ENCODE measurements at regions of chr11 and their contacts with region 1.

Region 1: DNA sequence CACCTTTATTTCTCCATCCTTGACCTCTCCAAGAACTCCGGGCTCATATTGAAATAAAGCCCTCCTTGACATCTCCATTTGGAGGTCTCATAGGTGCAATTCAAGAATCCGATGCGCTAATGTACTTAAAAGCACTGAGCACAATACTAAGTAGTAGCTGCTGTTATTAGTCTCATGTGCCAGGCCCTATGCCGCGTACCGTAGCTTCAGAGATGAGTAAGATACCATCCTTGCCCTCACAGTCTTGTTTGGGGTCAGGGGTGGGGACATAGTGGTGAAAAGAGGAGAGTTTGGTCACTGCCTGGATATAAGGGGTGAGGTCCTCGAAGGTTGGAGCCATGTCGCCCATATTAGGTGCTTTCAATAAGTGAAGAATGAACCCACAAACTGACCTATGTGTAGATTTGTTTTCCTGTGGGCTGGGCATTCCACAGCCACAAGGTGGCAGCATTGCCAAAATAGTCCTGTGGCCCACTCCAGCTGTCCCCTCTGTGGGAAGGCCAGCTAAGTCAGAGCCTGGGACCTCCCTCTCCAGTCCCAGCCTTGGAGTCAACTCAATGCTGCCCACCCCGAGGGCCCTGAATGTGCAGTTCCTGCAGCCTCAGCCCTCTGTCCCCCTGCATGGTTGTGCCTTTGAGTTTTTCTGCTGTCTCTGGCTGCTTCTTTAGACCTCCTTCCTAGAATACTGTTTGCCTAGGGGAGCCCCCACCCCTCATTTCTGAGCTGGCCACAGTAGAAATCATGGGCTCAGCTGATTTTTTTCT is 6.5 kb downstream of the DCPS start:
- DNase-seq: peak; percentile 79 to 89
- ATAC-seq: peak; percentile 93
- H3K4me3 ChIP-seq: no peak overlapping the region
- H3K27ac ChIP-seq: no peak overlapping the region
- H3K4me1 ChIP-seq: no peaks in the 10 kb centered on the region
- H3K27me3 ChIP-seq: no peaks in the 10 kb centered on the region

Region 2: DNA sequence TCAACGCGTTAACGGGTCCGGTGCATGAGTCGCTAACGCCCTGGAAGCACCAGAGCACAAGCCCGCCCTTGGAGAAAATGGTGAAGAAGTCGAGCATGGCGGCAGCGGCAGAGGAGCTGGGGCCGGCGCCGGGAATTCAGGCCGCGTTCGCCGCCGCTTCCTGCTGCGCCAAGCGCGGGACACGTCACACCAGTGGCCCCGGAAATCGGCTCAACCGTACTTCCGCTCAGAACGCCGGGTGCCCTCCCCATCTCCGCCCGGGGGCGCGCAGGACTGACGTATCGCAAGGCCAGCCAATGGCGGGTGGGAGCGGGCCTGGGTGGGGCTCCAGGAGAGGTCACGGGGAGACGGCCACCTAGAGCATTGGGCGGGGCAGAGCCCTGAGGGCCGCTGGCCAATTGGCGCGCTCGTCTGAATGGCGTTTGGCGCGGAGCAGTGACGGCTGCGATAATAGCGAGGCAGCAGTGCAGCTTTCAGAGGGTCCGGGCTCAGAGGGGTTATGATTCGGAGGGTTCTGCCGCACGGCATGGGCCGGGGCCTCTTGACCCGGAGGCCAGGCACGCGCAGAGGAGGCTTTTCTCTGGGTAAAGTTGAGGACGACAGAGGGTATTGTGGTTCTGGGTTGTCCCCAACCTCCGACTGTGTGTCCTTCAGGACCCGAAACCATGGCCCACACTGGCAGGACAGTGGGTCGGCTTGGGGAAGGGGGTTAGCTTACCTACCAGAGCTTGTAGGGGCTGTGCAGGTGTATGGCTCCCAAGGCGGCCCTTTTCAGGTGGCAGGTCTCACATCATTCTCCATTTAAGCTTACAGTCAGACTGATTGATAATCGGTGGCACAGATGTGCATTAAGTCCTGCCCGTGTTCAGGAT is 41.5 kb before region 1 on chr11 and contains the starts of genes FOXRED1 and SRPRA:
- intact Hi-C with region 1: no loop called
- DNase-seq: peak; percentile 100
- ATAC-seq: peak; percentile 100
- H3K4me3 ChIP-seq: peak within 1 kb of the TSS; percentile 86 to 93
- H3K27ac ChIP-seq: peak within 1 kb of the TSS in 1 of 2 donors; percentile 77
- H3K4me1 ChIP-seq: peaks cover 0 to 5% of the 10 kb centered on the region in 2 donors
- H3K27me3 ChIP-seq: no peaks in the 10 kb centered on the region
- total RNA-seq, gene FOXRED1: 19.9 to 25.4 TPM
- total RNA-seq, gene SRPRA: 103 to 104 TPM

Region 3: GRCh38 chr11:126345759-126346585 is 35.6 kb after region 1 on chr11:
- intact Hi-C with region 1: loop called in 1 of 2 experiments (anchors 5 kb)
- DNase-seq: peak; percentile 77
- ATAC-seq: peak; percentile 68
- H3K4me3 ChIP-seq: no peak overlapping the region
- H3K27ac ChIP-seq: peak overlapping the region in 1 of 2 donors; percentile 1
- H3K4me1 ChIP-seq: no peaks in the 10 kb centered on the region
- H3K27me3 ChIP-seq: no peaks in the 10 kb centered on the region

Region 4: GRCh38 chr11:126355324-126355925 is 45.0 kb after region 1 on chr11 and contains the start of gene ST3GAL4:
- intact Hi-C with region 1: loop called in 1 of 2 experiments (anchors 5 kb)
- DNase-seq: peak; percentile 90 to 94
- ATAC-seq: peak; percentile 87
- H3K4me3 ChIP-seq: peak within 1 kb of the TSS; percentile 89 to 95
- H3K27ac ChIP-seq: peak within 1 kb of the TSS in 1 of 2 donors; percentile 76
- H3K4me1 ChIP-seq: peaks cover 0 to 9% of the 10 kb centered on the region in 2 donors
- H3K27me3 ChIP-seq: no peaks in the 10 kb centered on the region
- total RNA-seq, gene ST3GAL4: 26.5 to 36.3 TPM

Region 5: GRCh38 chr11:126416542-126417090 is 106.2 kb after region 1 on chr11:
- intact Hi-C with region 1: loop called in 1 of 2 experiments (anchors 10 kb)
- DNase-seq: peak; percentile 95 to 96
- ATAC-seq: peak; percentile 91
- H3K4me3 ChIP-seq: peak overlapping the region in 1 of 2 donors; percentile 12
- H3K27ac ChIP-seq: peak overlapping the region in 1 of 2 donors; percentile 66
- H3K4me1 ChIP-seq: no peaks in the 10 kb centered on the region
- H3K27me3 ChIP-seq: no peaks in the 10 kb centered on the region

Region 6: DNA sequence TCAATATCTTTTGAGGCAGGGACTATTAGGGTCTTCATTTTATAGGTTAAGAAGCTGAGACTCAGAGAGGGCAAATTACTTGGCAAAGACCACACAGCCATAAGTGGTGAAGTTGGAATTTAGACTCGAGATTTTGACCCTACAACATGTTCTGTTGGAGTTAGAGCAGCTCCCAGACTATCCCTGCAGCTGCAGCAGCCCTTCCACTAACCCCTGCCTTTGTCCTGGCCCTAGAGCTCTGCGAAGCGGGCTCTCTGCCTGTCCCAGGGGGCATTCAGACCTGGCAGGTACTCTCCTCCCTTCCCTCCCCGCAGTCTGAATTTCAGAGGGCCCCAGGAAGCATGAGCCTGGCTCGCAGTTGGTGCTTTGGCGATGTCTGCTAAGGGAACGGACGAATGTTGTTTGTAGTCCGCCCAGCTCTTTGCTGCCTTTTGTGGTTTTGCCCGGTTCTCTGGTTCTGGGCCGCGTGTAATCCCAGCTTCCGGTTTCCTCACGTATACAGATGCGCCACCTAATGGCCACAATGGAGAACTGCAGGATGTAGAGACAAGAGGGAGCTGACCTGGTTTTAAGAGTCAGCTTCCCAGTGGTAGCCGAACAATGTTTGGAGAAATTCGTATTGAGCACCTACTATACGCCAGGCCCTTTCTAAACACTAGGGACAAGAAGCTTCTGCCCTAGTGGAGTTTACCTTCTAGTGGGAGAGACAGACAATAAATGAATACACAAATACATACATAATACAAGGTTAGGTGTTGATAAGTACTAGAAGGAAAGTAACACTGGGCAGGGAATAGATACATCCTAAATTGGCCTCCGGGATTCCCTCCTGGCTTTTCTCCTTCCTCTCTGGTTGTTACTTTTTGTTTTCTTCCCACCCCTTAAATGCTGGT is 170.2 kb after region 1 on chr11:
- intact Hi-C with region 1: loop called (anchors 1 to 2 kb)
- DNase-seq: peak; percentile 87
- ATAC-seq: peak; percentile 94
- H3K4me3 ChIP-seq: no peak overlapping the region
- H3K27ac ChIP-seq: peak overlapping the region in 1 of 2 donors; percentile 82
- H3K4me1 ChIP-seq: no peaks in the 10 kb centered on the region
- H3K27me3 ChIP-seq: no peaks in the 10 kb centered on the region

Region 7: GRCh38 chr11:126612671-126613070 is 302.3 kb after region 1 on chr11:
- intact Hi-C with region 1: no loop called
- DNase-seq: no peak
- ATAC-seq: no peak
- H3K4me3 ChIP-seq: no peak overlapping the region
- H3K27ac ChIP-seq: no peak overlapping the region
- H3K4me1 ChIP-seq: no peaks in the 10 kb centered on the region
- H3K27me3 ChIP-seq: no peaks in the 10 kb centered on the region